ENCODE measurements at regions of chr7 and their contacts with region 1.

Region 1: DNA sequence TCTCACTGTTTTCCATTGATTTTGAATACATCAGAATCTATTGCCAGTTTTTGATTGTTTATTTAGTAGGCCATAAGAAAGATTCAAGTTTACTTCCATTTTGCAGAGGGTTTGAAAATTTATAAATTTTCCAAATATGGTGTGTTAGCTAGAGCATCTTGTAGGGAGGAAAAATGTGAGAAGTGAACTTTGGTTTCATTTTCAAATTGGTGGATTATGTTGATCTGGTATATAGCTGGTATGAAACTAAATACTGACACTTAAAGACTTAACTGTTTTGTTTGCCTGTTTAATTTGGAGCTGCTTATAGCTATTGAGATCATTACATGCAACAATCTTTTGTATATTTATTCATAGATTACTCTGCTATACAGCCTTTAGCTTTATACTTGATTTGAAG is 108.1 kb downstream of the ADAM22 start:
- DNase-seq: no peak
- H3K4me3 ChIP-seq: no peak overlapping the region
- H3K27ac ChIP-seq: peak overlapping the region in 1 of 2 experiments; percentile 61; a peak in 2 of 4 replicates
- H3K4me1 ChIP-seq: peaks cover 0 to 49% of the 10 kb centered on the region in 2 experiments; a peak in 2 of 4 replicates
- H3K27me3 ChIP-seq: no peaks in the 10 kb centered on the region
- CTCF ChIP-seq: no peak
- EP300 ChIP-seq: no peak
- RAD21 ChIP-seq: no peak

Region 2: GRCh38 chr7:87933945-87934698 is 108.0 kb before region 1 on chr7 and contains the start of gene ADAM22:
- CTCF ChIA-PET with region 1: interaction called, 6 read pairs
- POLR2A ChIA-PET with region 1: interaction called, 14 read pairs
- DNase-seq: peak; percentile 98
- H3K4me3 ChIP-seq: peak within 1 kb of the TSS; percentile 74 to 75
- H3K27ac ChIP-seq: peak within 1 kb of the TSS in 1 of 2 experiments; percentile 91; a peak in 2 of 4 replicates
- H3K4me1 ChIP-seq: peaks cover 0 to 11% of the 10 kb centered on the region in 2 experiments; a peak in 2 of 4 replicates
- H3K27me3 ChIP-seq: no peaks in the 10 kb centered on the region
- CTCF ChIP-seq: 0 out of 2 replicates have a peak, but pooled peaks have one; percentile 25
- EP300 ChIP-seq: peak; percentile 22 to 60; a peak in 2 of 4 replicates
- RAD21 ChIP-seq: peak; percentile 62
- polyA plus RNA-seq, gene ADAM22: 3.0 and 4.8 TPM in 2 replicates

Measured in SK-N-SH (cell line).